ENCODE measurements at regions of chr12 and their contacts with region 1.

Region 1: DNA sequence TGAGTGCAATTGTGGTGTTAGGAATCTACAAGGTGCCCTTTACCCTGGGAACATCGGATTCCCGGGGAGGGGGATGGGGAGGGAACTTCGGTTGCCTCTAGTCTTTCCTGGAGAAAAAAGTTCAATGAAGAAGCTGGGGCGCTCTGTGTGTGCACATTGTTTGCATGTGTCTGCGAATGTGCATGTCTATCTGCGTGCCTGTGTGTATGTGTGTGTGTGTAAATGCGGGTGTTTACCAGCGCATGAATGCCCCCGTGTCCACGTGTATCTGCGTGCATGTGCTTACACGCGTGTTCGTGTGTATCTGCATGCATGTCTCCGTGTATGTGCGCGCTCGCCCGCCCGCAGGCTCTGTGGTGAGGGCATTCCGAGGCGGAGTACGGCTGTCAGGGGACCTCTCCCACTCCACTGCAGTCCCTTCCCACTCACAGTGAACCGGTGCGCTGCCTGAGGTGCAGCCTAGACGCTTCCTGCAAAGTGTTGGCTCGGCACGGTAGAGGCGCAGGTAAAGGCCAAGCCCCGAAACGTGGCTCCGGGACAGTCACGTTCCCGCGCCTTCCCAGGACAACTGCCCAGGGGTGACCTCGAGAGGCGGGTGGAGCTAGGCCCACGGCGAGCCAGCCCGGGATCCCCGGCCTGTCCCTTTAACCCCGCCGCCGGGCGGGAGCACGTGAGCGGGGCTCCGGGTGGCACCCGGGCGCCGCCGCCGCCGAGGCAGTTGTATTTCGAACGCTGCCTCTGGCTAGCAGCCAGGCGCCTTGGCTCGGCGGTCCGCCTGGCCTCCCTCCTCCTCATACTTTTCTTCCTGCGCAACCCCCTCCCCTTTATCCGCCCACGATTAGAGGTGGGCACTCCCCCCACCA is 539 bp upstream of the HMGA2 start:
- DNase-seq: peak; percentile 93
- ATAC-seq: peak; percentile 48
- H3K4me3 ChIP-seq: peak overlapping the region; percentile 92
- H3K27ac ChIP-seq: peak overlapping the region; percentile 95
- H3K4me1 ChIP-seq: peaks cover 37% of the 10 kb centered on the region
- H3K27me3 ChIP-seq: no peaks in the 10 kb centered on the region
- CTCF ChIP-seq: no peak

Region 2: DNA sequence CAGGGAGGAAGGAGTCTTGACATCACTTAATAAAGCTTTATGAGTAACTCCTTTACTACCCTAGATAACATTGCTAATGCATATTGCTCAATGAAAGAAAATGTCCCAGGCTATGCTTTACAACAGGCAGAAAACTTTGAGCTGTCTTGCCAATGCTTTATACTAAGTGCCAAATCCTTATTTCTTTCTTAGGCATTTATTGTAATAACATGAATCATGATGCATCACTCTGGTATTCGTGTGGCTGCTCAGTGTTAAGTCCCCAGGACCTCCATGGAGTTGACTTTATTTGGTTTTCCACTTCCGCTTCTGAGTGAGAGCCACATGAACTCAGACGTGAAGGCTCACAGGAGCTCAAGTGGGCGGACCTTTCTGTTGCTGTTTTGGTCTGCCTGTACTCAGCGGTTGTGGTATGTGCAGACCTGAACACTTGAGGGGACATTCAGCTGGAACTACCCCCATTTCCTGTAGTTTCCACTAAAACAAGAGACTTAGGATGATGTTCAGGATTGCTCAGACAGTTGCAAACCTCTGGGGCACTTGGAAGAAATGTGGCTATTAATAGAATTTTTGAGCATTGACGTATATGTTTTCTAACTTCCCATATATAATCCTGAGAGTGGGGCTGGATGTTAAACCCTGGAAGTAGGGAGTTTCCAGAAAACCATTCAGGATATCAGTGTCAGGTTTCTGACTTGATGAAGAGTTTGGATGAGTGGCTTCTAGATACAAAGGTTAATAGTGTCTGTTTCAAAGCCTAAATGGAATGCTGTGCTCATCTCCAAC is 286.7 kb before region 1 on chr12:
- CTCF ChIA-PET with region 1: no interaction called
- POLR2A ChIA-PET with region 1: no interaction called
- intact Hi-C with region 1: loop called (anchors 1 kb)
- DNase-seq: peak; percentile 99
- ATAC-seq: peak; percentile 75
- H3K4me3 ChIP-seq: peak overlapping the region; percentile 3; the same call in 1 of the 2 replicates
- H3K27ac ChIP-seq: peak overlapping the region; percentile 89
- H3K4me1 ChIP-seq: peaks cover 58% of the 10 kb centered on the region
- H3K27me3 ChIP-seq: no peaks in the 10 kb centered on the region
- CTCF ChIP-seq: no peak

Region 3: GRCh38 chr12:65649126-65649525 is 174.6 kb before region 1 on chr12:
- CTCF ChIA-PET with region 1: interaction called, 3 read pairs
- POLR2A ChIA-PET with region 1: interaction called, 5 read pairs
- intact Hi-C with region 1: loop called (anchors 1 kb)
- DNase-seq: peak; percentile 99
- ATAC-seq: peak; percentile 90
- H3K4me3 ChIP-seq: no peak overlapping the region
- H3K27ac ChIP-seq: peak overlapping the region; percentile 98
- H3K4me1 ChIP-seq: peaks cover 44% of the 10 kb centered on the region
- H3K27me3 ChIP-seq: no peaks in the 10 kb centered on the region
- CTCF ChIP-seq: no peak

Region 4: GRCh38 chr12:65695113-65695865 is 128.5 kb before region 1 on chr12:
- CTCF ChIA-PET with region 1: no interaction called
- POLR2A ChIA-PET with region 1: interaction called, 5 read pairs
- intact Hi-C with region 1: loop called (anchors 1 kb)
- DNase-seq: peak; percentile 99
- ATAC-seq: peak; percentile 90
- H3K4me3 ChIP-seq: no peak overlapping the region
- H3K27ac ChIP-seq: peak overlapping the region; percentile 85
- H3K4me1 ChIP-seq: peaks cover 45% of the 10 kb centered on the region
- H3K27me3 ChIP-seq: no peaks in the 10 kb centered on the region
- CTCF ChIP-seq: no peak

Region 5: GRCh38 chr12:66217342-66217917 is 393.7 kb after region 1 on chr12:
- CTCF ChIA-PET with region 1: no interaction called
- POLR2A ChIA-PET with region 1: no interaction called
- intact Hi-C with region 1: no loop called
- DNase-seq: no peak
- ATAC-seq: no peak
- H3K4me3 ChIP-seq: no peak overlapping the region
- H3K27ac ChIP-seq: no peak overlapping the region
- H3K4me1 ChIP-seq: no peaks in the 10 kb centered on the region
- H3K27me3 ChIP-seq: peaks cover 36% of the 10 kb centered on the region
- CTCF ChIP-seq: no peak

Measured in PC-3 (cell line).